CD4-positive, alpha-beta memory T cell (primary cell): ENCODE measurements at regions of chr9 and their contacts with region 1.

Region 1: GRCh38 chr9:78213712-78214111 is 22.2 kb upstream of the CEP78 start:
- DNase-seq: peak in 4 of 5 donors; percentile 29 to 44 (median 38)
- H3K4me3 ChIP-seq: no peak overlapping the region
- H3K4me3 Mint-ChIP-seq: peak overlapping the region in 4 of 8 donors; percentile 21 to 56 (median 44)
- H3K27ac ChIP-seq: no peak overlapping the region
- H3K27ac Mint-ChIP-seq: peak overlapping the region in 3 of 7 donors; percentile 30 to 65 (median 44)
- H3K4me1 ChIP-seq: peaks cover 37% of the 10 kb centered on the region
- H3K4me1 Mint-ChIP-seq: peaks cover 32 to 47% (median 37%) of the 10 kb centered on the region in 4 donors
- H3K27me3 ChIP-seq: no peaks in the 10 kb centered on the region
- H3K27me3 Mint-ChIP-seq: no peaks in the 10 kb centered on the region

Region 2: GRCh38 chr9:77433675-77434445 is 779.9 kb before region 1 on chr9:
- CTCF ChIA-PET with region 1: interaction called, 8 read pairs
- POLR2A ChIA-PET with region 1: no interaction called
- intact Hi-C with region 1: loop called (anchors 1 kb)
- DNase-seq: peak; percentile 35 to 42 (median 39)
- H3K4me3 ChIP-seq: no peak overlapping the region
- H3K4me3 Mint-ChIP-seq: peak overlapping the region in 3 of 8 donors; percentile 19 to 70 (median 39)
- H3K27ac ChIP-seq: no peak overlapping the region
- H3K27ac Mint-ChIP-seq: peak overlapping the region in 2 of 7 donors; percentile 30 to 77
- H3K4me1 ChIP-seq: no peaks in the 10 kb centered on the region
- H3K4me1 Mint-ChIP-seq: peaks cover 1 to 5% (median 4%) of the 10 kb centered on the region in 4 donors
- H3K27me3 ChIP-seq: no peaks in the 10 kb centered on the region
- H3K27me3 Mint-ChIP-seq: peaks cover 2 to 3% of the 10 kb centered on the region in 2 donors

Region 3: GRCh38 chr9:77841739-77842386 is 371.8 kb before region 1 on chr9:
- CTCF ChIA-PET with region 1: interaction called, 6 read pairs
- POLR2A ChIA-PET with region 1: no interaction called
- intact Hi-C with region 1: loop called (anchors 1 kb)
- DNase-seq: peak in 2 of 5 donors; percentile 3 to 9
- H3K4me3 ChIP-seq: no peak overlapping the region
- H3K4me3 Mint-ChIP-seq: no peak overlapping the region
- H3K27ac ChIP-seq: no peak overlapping the region
- H3K27ac Mint-ChIP-seq: peak overlapping the region in 2 of 7 donors; percentile 13 to 39
- H3K4me1 ChIP-seq: no peaks in the 10 kb centered on the region
- H3K4me1 Mint-ChIP-seq: peaks cover 7 to 23% (median 10%) of the 10 kb centered on the region in 4 donors
- H3K27me3 ChIP-seq: no peaks in the 10 kb centered on the region
- H3K27me3 Mint-ChIP-seq: no peaks in the 10 kb centered on the region

Region 4: GRCh38 chr9:78196258-78196657 is 17.5 kb before region 1 on chr9:
- CTCF ChIA-PET with region 1: interaction called, 10 read pairs
- POLR2A ChIA-PET with region 1: interaction called, 56 read pairs
- intact Hi-C with region 1: no loop called
- DNase-seq: no peak
- H3K4me3 ChIP-seq: no peak overlapping the region
- H3K4me3 Mint-ChIP-seq: no peak overlapping the region
- H3K27ac ChIP-seq: no peak overlapping the region
- H3K27ac Mint-ChIP-seq: peak overlapping the region in 1 of 7 donors; percentile 10
- H3K4me1 ChIP-seq: peaks cover 17% of the 10 kb centered on the region
- H3K4me1 Mint-ChIP-seq: peaks cover 10 to 23% (median 17%) of the 10 kb centered on the region in 4 donors
- H3K27me3 ChIP-seq: no peaks in the 10 kb centered on the region
- H3K27me3 Mint-ChIP-seq: no peaks in the 10 kb centered on the region